Left cardiac atrium (tissue), 4 donors: ENCODE measurements at regions of chr17 and their contacts with region 1.

Region 1: GRCh38 chr17:77602062-77602746 is 356.3 kb upstream of the TNRC6C start:
- DNase-seq: peak; percentile 82
- ATAC-seq: peak; percentile 90 to 95

Region 2: GRCh38 chr17:76867578-76868175 is 734.5 kb before region 1 on chr17:
- intact Hi-C with region 1: no loop called
- DNase-seq: no peak
- ATAC-seq: no peak

Region 3: GRCh38 chr17:77516902-77517301 is 85.3 kb before region 1 on chr17:
- intact Hi-C with region 1: no loop called
- DNase-seq: no peak
- ATAC-seq: no peak

Region 4: GRCh38 chr17:77677211-77677610 is 75.0 kb after region 1 on chr17:
- intact Hi-C with region 1: loop called in 1 of 2 experiments (anchors 5 kb)
- DNase-seq: no peak
- ATAC-seq: peak in 1 of 2 donors; percentile 21

Region 5: GRCh38 chr17:77734341-77735080 is 132.3 kb after region 1 on chr17:
- intact Hi-C with region 1: loop called in 1 of 2 experiments (anchors 2 kb)
- DNase-seq: peak; percentile 93
- ATAC-seq: peak; percentile 86 to 88